IMR-90 (cell line): ENCODE measurements at regions of chr4 and their contacts with region 1.

Region 1: GRCh38 chr4:157128395-157128794 is 52.4 kb downstream of the GLRB start:
- DNase-seq: peak; percentile 52
- ATAC-seq: peak; percentile 88
- H3K4me3 ChIP-seq: no peak overlapping the region
- H3K27ac ChIP-seq: no peak overlapping the region
- H3K4me1 ChIP-seq: no peaks in the 10 kb centered on the region
- H3K27me3 ChIP-seq: no peaks in the 10 kb centered on the region
- CTCF ChIP-seq: peak; percentile 67
- POLR2A ChIP-seq: no peak
- RAD21 ChIP-seq: peak; percentile 74

Region 2: DNA sequence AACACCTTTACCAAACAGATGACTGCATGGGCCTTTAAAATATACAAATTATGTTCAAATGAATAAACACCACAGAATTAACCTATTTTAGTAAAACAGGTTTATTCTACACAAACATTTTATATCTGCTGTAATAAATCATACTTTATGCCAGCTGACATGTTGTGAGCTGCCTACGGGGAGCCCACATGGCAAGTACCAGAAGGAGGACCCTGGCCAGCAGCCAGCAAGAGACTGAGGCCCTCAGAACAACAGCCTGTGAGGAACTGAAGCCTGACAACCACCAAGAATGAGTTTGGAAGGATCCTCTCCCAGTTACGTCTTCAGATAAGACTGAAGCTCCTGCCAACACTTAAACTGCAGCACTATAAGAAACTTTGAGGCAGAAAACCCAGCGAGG is 533.8 kb before region 1 on chr4:
- CTCF ChIA-PET with region 1: no interaction called
- POLR2A ChIA-PET with region 1: no interaction called
- dilution Hi-C with region 1: no loop called
- in situ Hi-C with region 1: no loop called
- intact Hi-C with region 1: loop called (anchors 5 kb)
- DNase-seq: no peak
- ATAC-seq: no peak
- H3K4me3 ChIP-seq: no peak overlapping the region
- H3K27ac ChIP-seq: no peak overlapping the region
- H3K4me1 ChIP-seq: peaks cover 3% of the 10 kb centered on the region; the same call in 1 of the 2 replicates
- H3K27me3 ChIP-seq: no peaks in the 10 kb centered on the region
- CTCF ChIP-seq: no peak
- POLR2A ChIP-seq: no peak
- RAD21 ChIP-seq: no peak

Region 3: DNA sequence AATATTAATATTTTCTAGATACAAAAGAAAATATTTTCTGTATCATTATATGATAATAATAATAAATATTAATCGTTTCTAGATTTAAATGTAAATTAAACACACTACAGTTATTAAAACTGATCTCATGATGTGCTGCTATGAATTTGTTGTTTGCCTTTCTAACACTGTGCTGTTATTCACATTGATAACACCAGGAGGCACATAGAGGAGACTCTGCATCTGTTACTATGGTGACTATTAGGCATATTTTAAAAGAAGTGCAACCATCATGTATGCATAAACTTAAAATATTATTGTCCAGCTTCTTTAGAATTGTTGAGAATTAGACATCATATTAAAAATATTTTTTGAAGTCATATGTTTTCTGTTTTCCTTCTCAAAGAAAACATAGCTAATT is 145.0 kb before region 1 on chr4:
- CTCF ChIA-PET with region 1: no interaction called
- POLR2A ChIA-PET with region 1: no interaction called
- dilution Hi-C with region 1: no loop called
- in situ Hi-C with region 1: no loop called
- intact Hi-C with region 1: loop called (anchors 1 kb)
- DNase-seq: peak; percentile 56
- ATAC-seq: peak; percentile 86
- H3K4me3 ChIP-seq: no peak overlapping the region
- H3K27ac ChIP-seq: no peak overlapping the region
- H3K4me1 ChIP-seq: no peaks in the 10 kb centered on the region
- H3K27me3 ChIP-seq: no peaks in the 10 kb centered on the region
- CTCF ChIP-seq: peak; percentile 64
- POLR2A ChIP-seq: no peak
- RAD21 ChIP-seq: peak; percentile 59

Region 4: DNA sequence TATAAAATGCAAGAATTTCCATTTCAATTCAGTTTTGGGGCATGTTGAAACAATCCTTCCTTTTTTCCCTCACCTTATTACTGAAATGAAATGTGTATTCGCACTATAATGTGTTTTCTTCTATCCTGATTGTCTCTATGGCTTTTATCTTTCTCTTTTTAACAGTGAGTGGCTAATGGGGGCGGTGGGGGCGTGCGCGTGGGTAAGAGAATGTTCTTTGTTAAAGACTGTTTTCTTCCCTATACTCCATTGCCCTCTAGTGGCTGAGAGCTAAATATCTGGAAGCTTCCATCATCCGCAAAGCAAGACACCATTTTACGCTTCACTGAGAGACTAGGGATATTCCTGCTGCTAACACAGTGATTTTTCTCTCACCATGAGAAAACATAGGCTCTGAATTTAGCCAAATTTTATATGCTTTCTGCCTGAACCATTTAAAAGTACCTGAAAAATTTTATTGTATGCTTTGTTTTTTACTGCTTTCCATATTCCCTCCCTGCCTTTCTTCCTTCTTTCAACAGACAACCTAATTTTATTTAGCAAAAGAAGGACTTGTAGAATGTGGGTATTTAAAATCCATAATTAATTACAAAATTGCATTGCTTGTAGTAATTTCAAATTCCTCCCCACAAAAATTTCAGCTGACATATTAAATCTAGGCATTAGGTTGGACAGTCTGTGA is 850.4 kb after region 1 on chr4:
- CTCF ChIA-PET with region 1: no interaction called
- POLR2A ChIA-PET with region 1: no interaction called
- dilution Hi-C with region 1: no loop called
- in situ Hi-C with region 1: no loop called
- intact Hi-C with region 1: loop called (anchors 10 kb)
- DNase-seq: peak; percentile 64
- ATAC-seq: peak; percentile 95
- H3K4me3 ChIP-seq: no peak overlapping the region; the same call in 1 of the 2 replicates
- H3K27ac ChIP-seq: no peak overlapping the region
- H3K4me1 ChIP-seq: no peaks in the 10 kb centered on the region
- H3K27me3 ChIP-seq: no peaks in the 10 kb centered on the region; the same call in 1 of the 2 replicates
- CTCF ChIP-seq: peak; percentile 78
- POLR2A ChIP-seq: no peak
- RAD21 ChIP-seq: peak; percentile 81